ENCODE measurements at regions of chr9 and their contacts with region 1.

Region 1: GRCh38 chr9:69190086-69190862 is 16.2 kb downstream of the TJP2 start:
- H3K4me3 Mint-ChIP-seq: no peak overlapping the region
- H3K27ac Mint-ChIP-seq: no peak overlapping the region
- H3K4me1 Mint-ChIP-seq: peaks cover 26% of the 10 kb centered on the region
- H3K27me3 Mint-ChIP-seq: no peaks in the 10 kb centered on the region

Region 2: DNA sequence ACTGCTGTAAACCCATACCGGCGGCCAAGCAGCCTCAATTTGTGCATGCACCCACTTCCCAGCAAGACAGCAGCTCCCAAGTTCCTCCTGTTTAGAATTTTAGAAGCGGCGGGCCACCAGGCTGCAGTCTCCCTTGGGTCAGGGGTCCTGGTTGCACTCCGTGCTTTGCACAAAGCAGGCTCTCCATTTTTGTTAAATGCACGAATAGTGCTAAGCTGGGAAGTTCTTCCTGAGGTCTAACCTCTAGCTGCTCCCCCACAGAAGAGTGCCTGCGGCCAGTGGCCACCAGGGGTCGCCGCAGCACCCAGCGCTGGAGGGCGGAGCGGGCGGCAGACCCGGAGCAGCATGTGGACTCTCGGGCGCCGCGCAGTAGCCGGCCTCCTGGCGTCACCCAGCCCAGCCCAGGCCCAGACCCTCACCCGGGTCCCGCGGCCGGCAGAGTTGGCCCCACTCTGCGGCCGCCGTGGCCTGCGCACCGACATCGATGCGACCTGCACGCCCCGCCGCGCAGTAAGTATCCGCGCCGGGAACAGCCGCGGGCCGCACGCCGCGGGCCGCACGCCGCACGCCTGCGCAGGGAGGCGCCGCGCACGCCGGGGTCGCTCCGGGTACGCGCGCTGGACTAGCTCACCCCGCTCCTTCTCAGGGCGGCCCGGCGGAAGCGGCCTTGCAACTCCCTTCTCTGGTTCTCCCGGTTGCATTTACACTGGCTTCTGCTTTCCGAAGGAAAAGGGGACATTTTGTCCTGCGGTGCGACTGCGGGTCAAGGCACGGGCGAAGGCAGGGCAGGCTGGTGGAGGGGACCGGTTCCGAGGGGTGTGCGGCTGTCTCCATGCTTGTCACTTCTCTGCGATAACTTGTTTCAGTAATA is 154.6 kb before region 1 on chr9 and contains the start of gene FXN:
- intact Hi-C with region 1: loop called (anchors 5 kb)
- H3K4me3 Mint-ChIP-seq: peak within 1 kb of the TSS; percentile 93
- H3K27ac Mint-ChIP-seq: peak within 1 kb of the TSS; percentile 98
- H3K4me1 Mint-ChIP-seq: peaks cover 16% of the 10 kb centered on the region
- H3K27me3 Mint-ChIP-seq: no peaks in the 10 kb centered on the region

Region 3: GRCh38 chr9:69054989-69055388 is 135.3 kb before region 1 on chr9:
- intact Hi-C with region 1: loop called (anchors 1 kb)
- H3K4me3 Mint-ChIP-seq: no peak overlapping the region
- H3K27ac Mint-ChIP-seq: no peak overlapping the region
- H3K4me1 Mint-ChIP-seq: peaks cover 5% of the 10 kb centered on the region
- H3K27me3 Mint-ChIP-seq: no peaks in the 10 kb centered on the region

Region 4: DNA sequence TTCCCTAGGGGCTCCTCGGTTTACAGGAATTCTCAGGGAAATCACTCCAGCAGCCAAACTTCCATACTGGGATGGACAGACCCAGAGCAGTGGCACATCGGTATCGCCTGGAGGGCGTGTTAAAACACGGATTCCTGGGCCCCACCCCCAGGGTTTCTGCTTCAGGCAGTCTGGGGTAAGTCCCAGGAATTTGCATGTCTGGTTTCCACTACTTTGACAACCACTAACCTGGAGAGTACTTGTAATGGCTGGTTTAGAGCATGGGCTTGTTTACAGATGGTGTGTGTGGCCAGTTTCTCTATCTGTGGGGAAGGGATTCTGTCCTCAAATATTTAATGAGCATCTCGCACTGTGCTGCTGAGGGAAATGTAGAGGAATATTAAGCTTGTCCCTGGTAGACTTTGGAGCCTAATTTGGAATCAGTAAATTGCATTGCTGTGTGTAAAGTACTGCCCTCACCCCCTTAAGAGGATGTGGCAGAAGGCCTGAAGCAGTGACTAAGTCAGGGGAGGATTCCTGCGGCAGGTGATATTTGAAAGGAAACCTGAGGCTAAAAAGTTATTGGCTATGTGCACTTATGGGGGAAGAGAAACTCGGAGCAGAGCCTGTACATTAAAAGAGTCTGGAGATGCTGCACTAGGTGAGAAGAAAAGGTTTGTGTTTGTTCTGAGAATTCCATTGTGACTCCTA is 34.8 kb before region 1 on chr9:
- intact Hi-C with region 1: loop called (anchors 5 kb)
- H3K4me3 Mint-ChIP-seq: no peak overlapping the region
- H3K27ac Mint-ChIP-seq: no peak overlapping the region
- H3K4me1 Mint-ChIP-seq: no peaks in the 10 kb centered on the region
- H3K27me3 Mint-ChIP-seq: no peaks in the 10 kb centered on the region

Measured in dendritic cell treated with granulocyte-macrophage colony-stimulating factor and Interleukin-4, amounts not matched to agents 40 ng/mL and 50 ng/mL, for 4 days (primary cell).